ENCODE measurements at regions of chr18 and their contacts with region 1.

Region 1: GRCh38 chr18:59899298-59900221 is at the start of gene PMAIP1:
- DNase-seq: peak; percentile 84
- H3K4me3 Mint-ChIP-seq: peak within 1 kb of the TSS; percentile 97
- H3K27ac Mint-ChIP-seq: peak within 1 kb of the TSS; percentile 99
- H3K4me1 Mint-ChIP-seq: peaks cover 41% of the 10 kb centered on the region
- H3K27me3 Mint-ChIP-seq: no peaks in the 10 kb centered on the region
- total RNA-seq, gene PMAIP1: 57.2 and 59.5 TPM in 2 replicates

Region 2: DNA sequence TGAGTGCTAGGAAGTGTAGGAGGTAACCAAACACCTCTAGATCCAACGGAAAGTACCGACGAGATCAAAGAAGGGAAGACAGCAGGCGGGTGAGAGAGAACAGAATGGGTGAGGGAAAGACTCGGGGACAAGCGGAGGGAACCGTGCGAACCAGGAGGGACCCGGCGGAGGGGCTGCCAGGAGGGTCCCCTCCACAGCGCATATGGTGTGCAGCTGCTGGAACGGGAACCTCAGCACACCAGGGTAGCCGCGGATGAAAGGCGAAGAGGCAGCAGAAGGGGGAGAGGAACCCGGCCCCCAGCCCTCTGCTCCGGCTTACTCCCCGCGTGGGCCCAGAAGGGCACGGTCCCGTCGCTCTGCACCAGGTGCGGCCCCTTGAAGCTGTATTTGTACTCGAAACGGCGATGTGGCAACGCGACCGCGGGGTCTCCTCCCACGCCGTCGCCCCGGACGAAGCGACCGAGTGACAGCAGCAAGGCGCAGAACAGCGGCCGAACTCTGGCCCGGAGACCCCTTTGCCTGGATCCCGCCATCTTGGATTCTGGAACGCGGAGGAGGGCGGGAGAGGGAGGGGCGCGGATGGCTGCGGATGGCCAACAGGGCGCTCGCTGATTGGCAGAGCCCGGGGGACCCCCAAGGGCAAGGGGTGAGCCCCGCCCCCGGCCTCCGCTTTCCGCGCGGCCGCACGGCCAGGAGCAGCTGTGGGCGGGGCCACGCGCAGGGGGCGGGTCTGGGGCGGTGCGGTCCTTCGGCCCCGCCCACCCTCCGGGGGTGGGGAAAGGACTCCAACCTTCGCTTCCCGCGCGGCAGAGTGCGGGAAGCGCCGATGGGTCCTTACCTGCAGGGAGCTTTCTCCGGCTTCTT is 540.6 kb before region 1 on chr18 and contains the start of gene LMAN1:
- intact Hi-C with region 1: loop called (anchors 2 kb)
- DNase-seq: peak; percentile 92
- H3K4me3 Mint-ChIP-seq: peak within 1 kb of the TSS; percentile 99
- H3K27ac Mint-ChIP-seq: peak within 1 kb of the TSS; percentile 100
- H3K4me1 Mint-ChIP-seq: peaks cover 27% of the 10 kb centered on the region
- H3K27me3 Mint-ChIP-seq: no peaks in the 10 kb centered on the region
- total RNA-seq, gene LMAN1: 147 and 175 TPM in 2 replicates

Region 3: DNA sequence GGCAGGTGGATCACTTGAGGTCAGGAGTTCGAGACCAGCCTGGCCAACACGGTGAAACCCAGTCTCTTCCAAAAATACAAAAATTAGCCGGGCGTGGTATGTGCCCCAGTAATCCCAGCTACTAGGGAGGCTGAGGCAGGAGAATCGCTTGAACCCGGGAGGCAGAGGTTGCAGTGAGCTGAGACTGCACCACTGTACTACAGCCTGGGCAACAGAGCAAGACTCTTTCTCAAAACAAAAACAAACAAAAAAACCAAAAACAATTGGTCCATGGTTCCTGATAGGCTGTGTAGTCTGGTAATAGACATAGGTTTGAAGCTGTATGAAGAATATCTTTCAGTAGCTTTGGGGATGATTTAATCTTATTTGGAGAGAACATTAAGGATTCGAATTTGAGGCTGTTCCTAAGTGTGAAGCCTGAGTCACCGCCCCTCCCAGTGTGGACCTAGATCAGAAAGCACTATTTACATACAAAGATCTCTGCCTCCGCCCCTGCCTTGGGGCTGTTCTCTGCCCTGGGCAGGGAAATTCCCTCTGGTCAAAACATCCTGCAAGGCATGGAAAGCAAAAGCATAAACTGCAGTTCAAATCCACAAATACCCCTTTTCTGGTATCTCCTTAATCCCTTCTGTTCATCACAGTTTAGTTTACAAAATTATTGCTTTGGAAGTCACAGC is 52.6 kb before region 1 on chr18:
- intact Hi-C with region 1: loop called (anchors 1 kb)
- DNase-seq: peak; percentile 61
- H3K4me3 Mint-ChIP-seq: no peak overlapping the region
- H3K27ac Mint-ChIP-seq: peak overlapping the region; percentile 89
- H3K4me1 Mint-ChIP-seq: peaks cover 21% of the 10 kb centered on the region
- H3K27me3 Mint-ChIP-seq: peaks cover 3% of the 10 kb centered on the region

Region 4: GRCh38 chr18:59927246-59927825 is 27.8 kb after region 1 on chr18:
- intact Hi-C with region 1: loop called (anchors 1 kb)
- DNase-seq: no peak
- H3K4me3 Mint-ChIP-seq: peak overlapping the region; percentile 13
- H3K27ac Mint-ChIP-seq: peak overlapping the region; percentile 88
- H3K4me1 Mint-ChIP-seq: peaks cover 47% of the 10 kb centered on the region
- H3K27me3 Mint-ChIP-seq: no peaks in the 10 kb centered on the region

Region 5: DNA sequence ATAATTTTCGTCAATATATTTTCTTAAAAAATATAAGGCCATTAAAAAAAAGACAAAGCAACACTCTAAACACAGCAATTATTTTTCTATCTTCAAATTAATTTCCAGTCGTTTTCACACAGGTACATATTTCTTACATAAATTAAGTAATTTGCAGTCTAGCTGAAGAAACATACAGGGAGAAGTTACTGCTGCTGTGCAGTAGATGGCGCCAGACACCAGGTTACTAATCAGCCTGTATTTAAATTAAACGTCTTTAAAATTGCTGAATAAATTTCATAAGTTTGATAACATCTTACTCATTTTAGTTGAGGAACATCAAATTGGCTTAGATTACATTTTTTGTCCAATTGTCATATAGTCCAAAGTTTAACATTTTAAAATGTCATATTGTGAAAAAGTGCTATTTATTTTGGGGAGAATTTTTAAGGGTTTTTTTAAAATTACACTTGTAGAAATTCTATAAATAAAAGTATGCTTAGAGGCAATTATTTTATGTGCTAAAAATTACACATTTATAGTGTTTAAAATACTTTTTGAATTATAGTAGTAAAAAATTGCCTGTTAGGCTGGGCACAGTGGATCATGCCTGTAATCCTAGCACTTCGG is 88.6 kb after region 1 on chr18:
- intact Hi-C with region 1: loop called (anchors 5 kb)
- DNase-seq: no peak
- H3K4me3 Mint-ChIP-seq: no peak overlapping the region
- H3K27ac Mint-ChIP-seq: no peak overlapping the region
- H3K4me1 Mint-ChIP-seq: no peaks in the 10 kb centered on the region
- H3K27me3 Mint-ChIP-seq: peaks cover 26% of the 10 kb centered on the region